ENCODE measurements at regions of chr12 and their contacts with region 1.

Region 1: GRCh38 chr12:121443193-121443870 is 43.4 kb downstream of the RNF34 start:
- DNase-seq: peak; percentile 86
- H3K4me3 ChIP-seq: no peak overlapping the region
- H3K27ac ChIP-seq: peak overlapping the region in 3 of 4 donors; percentile 37 to 59 (median 46)
- H3K4me1 ChIP-seq: peaks cover 8 to 21% (median 12%) of the 10 kb centered on the region in 4 donors
- H3K27me3 ChIP-seq: no peaks in the 10 kb centered on the region
- CTCF ChIP-seq: peak; percentile 79 to 93 (median 88)
- EP300 ChIP-seq: no peak
- POLR2A ChIP-seq: no peak

Region 2: DNA sequence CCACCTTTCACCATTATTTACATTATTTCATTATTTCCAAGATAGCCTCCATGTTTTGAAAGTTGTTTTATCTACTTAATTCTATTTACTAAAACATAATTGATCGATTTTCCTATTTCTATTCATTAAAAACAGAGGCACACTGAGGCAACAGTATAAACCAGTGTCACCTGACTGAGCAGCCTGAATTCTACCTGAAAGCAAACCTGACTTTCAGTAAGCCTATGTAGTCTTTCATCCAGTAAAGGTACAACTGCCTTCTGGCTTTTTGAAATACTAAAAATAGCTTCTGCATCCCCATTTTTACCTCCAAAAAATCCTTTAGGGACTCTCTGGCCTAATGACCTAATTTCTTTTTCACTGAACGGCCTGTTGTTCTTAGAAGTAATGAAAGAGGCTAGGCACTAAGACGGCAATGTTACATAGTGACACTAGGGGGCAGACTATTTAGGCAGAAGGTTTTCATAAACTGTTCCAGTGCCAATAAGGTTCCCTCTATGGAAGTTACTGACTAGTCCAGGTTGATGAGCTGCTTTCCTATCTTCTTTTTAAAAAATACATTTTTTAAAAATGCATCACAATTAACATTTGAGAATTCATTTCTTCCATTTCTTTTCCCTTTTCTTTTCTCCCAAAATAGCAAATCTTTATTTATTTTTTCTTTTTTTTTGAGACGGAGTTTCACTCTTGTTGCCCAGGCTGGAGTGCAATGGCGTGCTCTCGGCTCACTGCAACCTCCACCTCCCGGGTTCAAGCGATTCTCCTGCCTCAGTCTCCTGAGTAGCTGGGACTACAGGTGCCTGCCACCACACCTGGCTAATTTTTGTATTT is 108.6 kb before region 1 on chr12:
- in situ Hi-C with region 1: loop called (anchors 10 to 25 kb)
- intact Hi-C with region 1: loop called (anchors 1 kb)
- DNase-seq: no peak
- H3K4me3 ChIP-seq: no peak overlapping the region
- H3K27ac ChIP-seq: no peak overlapping the region
- H3K4me1 ChIP-seq: peaks cover 0 to 3% (median 1%) of the 10 kb centered on the region in 4 donors
- H3K27me3 ChIP-seq: no peaks in the 10 kb centered on the region
- CTCF ChIP-seq: peak; percentile 81 to 91 (median 87)
- EP300 ChIP-seq: no peak
- POLR2A ChIP-seq: no peak

Measured in transverse colon (tissue), 4 donors.